GM12878 (cell line): ENCODE measurements at regions of chr16 and their contacts with region 1.

Region 1: GRCh38 chr16:4506450-4506849 is 30.3 kb downstream of the HMOX2 start:
- DNase-seq: peak; percentile 39
- ATAC-seq: peak; percentile 92
- H3K4me3 ChIP-seq: no peak overlapping the region
- H3K27ac ChIP-seq: peak overlapping the region; percentile 79; the same call in 1 of the 2 replicates
- H3K4me1 ChIP-seq: peaks cover 20% of the 10 kb centered on the region
- H3K27me3 ChIP-seq: no peaks in the 10 kb centered on the region
- CTCF ChIP-seq: peak; percentile 85 to 93 (median 93)
- EP300 ChIP-seq: no peak
- POLR2A ChIP-seq: no peak
- RAD21 ChIP-seq: peak; percentile 95

Region 2: DNA sequence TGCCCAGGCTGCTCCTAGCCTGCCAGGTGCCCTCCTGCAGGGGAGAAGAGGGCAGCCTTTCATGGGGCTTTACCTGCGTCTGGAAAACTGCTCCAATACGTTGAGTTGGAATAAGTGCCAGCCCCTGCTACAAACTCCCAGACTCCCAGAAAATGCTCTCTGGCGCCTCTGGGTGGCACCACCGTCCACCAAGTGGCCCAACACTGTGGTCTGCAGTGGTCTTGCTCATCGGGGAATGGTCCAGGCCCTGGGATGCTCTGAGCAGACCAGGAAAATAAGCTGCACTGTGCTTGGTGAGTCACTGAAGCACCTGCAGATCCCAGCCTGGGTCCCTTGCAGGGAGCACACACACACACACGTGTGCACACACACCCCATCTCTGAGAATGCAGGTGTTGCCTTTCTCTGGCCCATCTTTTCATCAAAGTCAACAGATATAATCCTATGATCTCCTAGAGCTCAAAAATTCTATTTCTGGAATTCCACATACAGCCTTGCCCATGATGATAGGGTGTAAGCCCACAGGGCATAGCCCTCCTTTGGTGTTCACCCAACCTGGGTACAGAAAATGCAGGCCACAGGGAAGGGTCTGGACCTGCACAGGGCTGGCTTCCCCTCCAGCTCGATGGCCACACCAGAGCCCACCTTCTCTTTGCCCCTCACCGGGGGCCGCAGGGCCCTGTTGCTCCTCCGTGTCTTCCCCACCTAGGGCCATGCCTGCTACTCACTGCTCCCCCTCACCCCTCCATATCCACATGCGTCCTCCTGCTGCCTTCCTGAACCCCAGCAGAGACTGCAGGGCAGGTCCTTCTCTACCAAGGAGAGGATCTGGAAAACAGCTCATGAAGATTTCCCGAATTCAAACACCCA is 11.6 kb after region 1 on chr16:
- CTCF ChIA-PET with region 1: interaction called, 36 read pairs
- POLR2A ChIA-PET with region 1: interaction called, 4 read pairs
- RAD21 ChIA-PET with region 1: interaction called, 12 read pairs
- SMC1A ChIA-PET with region 1: interaction called, 7 read pairs
- in situ Hi-C with region 1: no loop called
- intact Hi-C with region 1: no loop called
- DNase-seq: no peak
- ATAC-seq: peak; percentile 44
- H3K4me3 ChIP-seq: no peak overlapping the region
- H3K27ac ChIP-seq: no peak overlapping the region
- H3K4me1 ChIP-seq: peaks cover 23% of the 10 kb centered on the region
- H3K27me3 ChIP-seq: no peaks in the 10 kb centered on the region
- CTCF ChIP-seq: peak; percentile 54 to 73 (median 68); a peak in 5 of 6 replicates
- EP300 ChIP-seq: no peak
- POLR2A ChIP-seq: no peak
- RAD21 ChIP-seq: peak; percentile 82

Region 3: GRCh38 chr16:4544473-4544872 is 38.0 kb after region 1 on chr16:
- CTCF ChIA-PET with region 1: interaction called, 90 read pairs
- POLR2A ChIA-PET with region 1: interaction called, 7 read pairs
- RAD21 ChIA-PET with region 1: interaction called, 26 read pairs
- SMC1A ChIA-PET with region 1: interaction called, 41 read pairs
- in situ Hi-C with region 1: no loop called
- intact Hi-C with region 1: loop called (anchors 1 kb)
- DNase-seq: no peak
- ATAC-seq: no peak
- H3K4me3 ChIP-seq: no peak overlapping the region
- H3K27ac ChIP-seq: no peak overlapping the region
- H3K4me1 ChIP-seq: no peaks in the 10 kb centered on the region
- H3K27me3 ChIP-seq: no peaks in the 10 kb centered on the region
- CTCF ChIP-seq: no peak
- EP300 ChIP-seq: no peak
- POLR2A ChIP-seq: no peak
- RAD21 ChIP-seq: no peak

Region 4: DNA sequence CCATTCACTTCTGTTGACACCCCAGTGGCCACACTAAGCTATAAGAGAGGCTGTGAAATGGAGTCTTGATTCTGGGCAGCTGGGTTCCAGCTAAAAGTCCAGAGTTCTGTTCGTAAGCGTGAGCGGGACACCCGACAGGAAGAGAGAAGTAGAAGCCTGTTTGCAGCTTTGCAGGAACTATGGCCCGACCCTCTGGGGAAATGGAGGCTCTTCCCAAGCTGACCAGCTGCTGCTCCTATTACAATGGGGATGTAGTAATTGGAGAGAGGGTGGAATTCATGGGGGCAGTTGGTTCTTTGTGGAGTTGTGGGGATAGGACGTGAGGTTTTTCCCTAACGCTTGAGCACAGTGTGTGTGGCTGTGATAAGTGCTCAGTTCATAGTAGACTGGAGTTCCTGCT is 79.8 kb after region 1 on chr16:
- CTCF ChIA-PET with region 1: interaction called, 52 read pairs
- POLR2A ChIA-PET with region 1: interaction called, 7 read pairs
- RAD21 ChIA-PET with region 1: interaction called, 17 read pairs
- SMC1A ChIA-PET with region 1: interaction called, 18 read pairs
- in situ Hi-C with region 1: no loop called
- intact Hi-C with region 1: loop called (anchors 2 kb)
- DNase-seq: no peak
- ATAC-seq: no peak
- H3K4me3 ChIP-seq: no peak overlapping the region
- H3K27ac ChIP-seq: no peak overlapping the region
- H3K4me1 ChIP-seq: no peaks in the 10 kb centered on the region
- H3K27me3 ChIP-seq: no peaks in the 10 kb centered on the region; a peak in 1 of 4 replicates
- CTCF ChIP-seq: no peak
- EP300 ChIP-seq: no peak
- POLR2A ChIP-seq: no peak
- RAD21 ChIP-seq: no peak